ENCODE measurements at regions of chr3 and their contacts with region 1.

Region 1: DNA sequence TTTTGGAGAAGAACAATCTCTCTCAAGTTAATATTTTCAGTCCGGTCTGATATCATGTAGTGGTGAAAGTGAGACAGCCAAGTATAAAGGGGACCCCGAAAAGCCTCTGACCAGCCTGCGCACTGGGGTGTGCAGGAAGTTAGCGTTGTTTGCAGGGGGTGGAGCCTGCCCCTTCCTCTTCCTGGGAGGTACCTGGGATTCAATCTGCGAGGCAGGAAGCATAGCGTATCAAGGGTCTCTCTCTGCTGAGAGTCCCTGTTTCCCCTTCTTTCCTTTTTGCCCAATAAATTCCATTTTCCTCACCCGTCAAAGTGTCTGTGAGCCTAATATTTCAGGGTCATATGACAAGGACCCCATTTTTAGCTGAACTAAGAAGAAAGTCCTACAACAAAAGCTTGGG is 44.8 kb upstream of the CBLB start:
- DNase-seq: no peak
- H3K4me3 ChIP-seq: no peak overlapping the region
- H3K27ac ChIP-seq: no peak overlapping the region
- H3K4me1 ChIP-seq: no peaks in the 10 kb centered on the region
- CTCF ChIP-seq: no peak

Region 2: GRCh38 chr3:105899516-105899915 is 14.1 kb before region 1 on chr3:
- CTCF ChIA-PET with region 1: no interaction called
- POLR2A ChIA-PET with region 1: interaction called, 10 read pairs
- intact Hi-C with region 1: no loop called
- DNase-seq: no peak
- H3K4me3 ChIP-seq: no peak overlapping the region
- H3K27ac ChIP-seq: no peak overlapping the region
- H3K4me1 ChIP-seq: no peaks in the 10 kb centered on the region
- CTCF ChIP-seq: no peak

Region 3: GRCh38 chr3:105938101-105938500 is 24.5 kb after region 1 on chr3:
- CTCF ChIA-PET with region 1: no interaction called
- POLR2A ChIA-PET with region 1: no interaction called
- intact Hi-C with region 1: no loop called
- DNase-seq: no peak
- H3K4me3 ChIP-seq: no peak overlapping the region
- H3K27ac ChIP-seq: no peak overlapping the region
- H3K4me1 ChIP-seq: no peaks in the 10 kb centered on the region
- CTCF ChIP-seq: no peak